ENCODE measurements at regions of chr2 and their contacts with region 1.

Region 1: GRCh38 chr2:44291281-44292248 is 16.3 kb downstream of the SLC3A1 start:
- DNase-seq: peak in 9 of 10 donors; percentile 21 to 77 (median 57)
- H3K4me3 ChIP-seq: peak overlapping the region in 27 of 59 donors; percentile 1 to 48 (median 26)
- H3K27ac ChIP-seq: peak overlapping the region in 42 of 59 donors; percentile 5 to 80 (median 60)
- H3K27me3 ChIP-seq: no peaks in the 10 kb centered on the region
- CTCF ChIP-seq: peak; percentile 11 to 91 (median 70)

Region 2: GRCh38 chr2:44167940-44168680 is 123.5 kb before region 1 on chr2:
- intact Hi-C with region 1: loop called in 1 of 2 experiments (anchors 5 kb)
- DNase-seq: peak; percentile 92 to 100 (median 100)
- H3K4me3 ChIP-seq: peak overlapping the region; percentile 48 to 100 (median 73)
- H3K27ac ChIP-seq: peak overlapping the region; percentile 86 to 100 (median 99)
- H3K27me3 ChIP-seq: no peaks in the 10 kb centered on the region
- CTCF ChIP-seq: peak in 12 of 56 donors; percentile 4 to 37 (median 14)

Region 3: GRCh38 chr2:44184106-44184505 is 107.5 kb before region 1 on chr2:
- intact Hi-C with region 1: no loop called
- DNase-seq: no peak
- H3K4me3 ChIP-seq: no peak overlapping the region
- H3K27ac ChIP-seq: no peak overlapping the region
- H3K27me3 ChIP-seq: no peaks in the 10 kb centered on the region
- CTCF ChIP-seq: no peak

Region 4: GRCh38 chr2:44244129-44244871 is 47.3 kb before region 1 on chr2:
- intact Hi-C with region 1: loop called (anchors 1 to 5 kb)
- DNase-seq: peak in 7 of 10 donors; percentile 56 to 76 (median 63)
- H3K4me3 ChIP-seq: peak overlapping the region; percentile 14 to 74 (median 51)
- H3K27ac ChIP-seq: peak overlapping the region in 58 of 59 donors; percentile 27 to 94 (median 80)
- H3K27me3 ChIP-seq: no peaks in the 10 kb centered on the region
- CTCF ChIP-seq: peak; percentile 55 to 94 (median 78)

Region 5: GRCh38 chr2:44273596-44273995 is 18.0 kb before region 1 on chr2:
- intact Hi-C with region 1: loop called in 1 of 2 experiments (anchors 2 kb)
- DNase-seq: no peak
- H3K4me3 ChIP-seq: no peak overlapping the region
- H3K27ac ChIP-seq: no peak overlapping the region
- H3K27me3 ChIP-seq: no peaks in the 10 kb centered on the region
- CTCF ChIP-seq: no peak